Right ventricle myocardium inferior (tissue), 1 donor: ENCODE measurements at regions of chr18 and their contacts with region 1.

Region 1: DNA sequence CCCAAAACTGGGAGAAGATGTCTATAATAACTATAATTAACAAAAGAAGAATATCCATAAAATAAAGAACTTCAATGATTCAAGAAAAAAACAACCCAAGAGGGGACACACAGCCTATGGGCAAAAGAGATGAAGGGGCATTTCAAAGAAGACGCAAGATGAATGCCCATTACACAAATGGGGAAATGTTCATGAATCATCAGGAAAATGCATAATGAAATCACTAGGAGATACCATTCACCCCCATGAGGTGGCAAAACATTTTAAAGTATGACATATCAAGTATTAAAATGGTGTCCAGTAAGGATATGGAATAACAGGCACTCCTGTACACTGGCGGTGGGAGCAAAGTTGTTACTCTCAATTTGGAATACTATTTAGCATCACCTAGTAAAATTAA is 183.3 kb downstream of the TXNL1 start:
- DNase-seq: no peak
- ATAC-seq: no peak

Region 2: DNA sequence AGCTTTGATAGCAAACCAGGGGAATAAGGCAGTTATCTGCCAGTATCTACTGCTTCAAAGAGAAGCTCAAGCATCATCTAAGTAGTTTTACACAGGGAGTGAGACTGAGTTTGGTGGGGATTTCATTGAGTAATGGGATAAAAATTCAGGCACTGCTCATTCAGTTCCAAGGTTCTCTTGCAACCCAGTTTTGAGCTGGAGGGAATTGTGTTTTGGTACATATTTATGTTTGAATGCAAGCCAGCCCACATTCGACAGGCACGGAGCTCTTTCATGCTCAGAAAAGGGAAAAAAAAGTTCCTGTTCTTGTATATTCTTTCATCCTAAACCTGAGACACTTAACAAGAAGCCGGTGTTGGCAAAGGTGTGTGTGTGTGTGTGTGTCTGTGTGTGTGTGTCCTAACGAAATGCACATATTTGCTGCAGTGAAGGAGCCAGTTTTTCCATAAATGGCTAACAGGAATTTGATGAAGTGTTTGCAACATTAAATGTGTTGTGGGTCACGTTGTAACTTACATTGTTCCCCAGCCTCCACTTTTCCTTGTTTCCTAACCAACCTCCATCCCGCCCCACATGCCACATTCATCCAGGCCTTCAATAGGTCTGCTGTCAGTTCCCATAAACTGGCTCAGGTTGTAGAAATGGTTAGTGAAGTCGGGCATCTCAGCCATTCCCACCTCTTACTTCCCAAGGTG is 127.8 kb before region 1 on chr18:
- intact Hi-C with region 1: no loop called
- DNase-seq: no peak
- ATAC-seq: no peak

Region 3: GRCh38 chr18:56382541-56382940 is 72.6 kb before region 1 on chr18:
- intact Hi-C with region 1: no loop called
- DNase-seq: no peak
- ATAC-seq: peak; percentile 64

Region 4: GRCh38 chr18:56487801-56488200 is 32.7 kb after region 1 on chr18:
- intact Hi-C with region 1: loop called (anchors 2 kb)
- DNase-seq: no peak
- ATAC-seq: no peak